Mammary epithelial cell (primary cell): ENCODE measurements at regions of chr13 and their contacts with region 1.

Region 1: GRCh38 chr13:39777527-39778061 is 122.1 kb downstream of the COG6 start:
- DNase-seq: peak; percentile 92
- H3K4me3 ChIP-seq: no peak overlapping the region
- H3K27ac ChIP-seq: no peak overlapping the region
- H3K4me1 ChIP-seq: peaks cover 15% of the 10 kb centered on the region
- H3K27me3 ChIP-seq: no peaks in the 10 kb centered on the region
- CTCF ChIP-seq: peak; percentile 56 to 69

Region 2: GRCh38 chr13:39684531-39685137 is 93.0 kb before region 1 on chr13:
- CTCF ChIA-PET with region 1: no interaction called
- dilution Hi-C with region 1: no loop called
- in situ Hi-C with region 1: no loop called
- intact Hi-C with region 1: loop called (anchors 5 kb)
- DNase-seq: peak; percentile 16
- H3K4me3 ChIP-seq: no peak overlapping the region
- H3K27ac ChIP-seq: no peak overlapping the region
- H3K4me1 ChIP-seq: no peaks in the 10 kb centered on the region
- H3K27me3 ChIP-seq: no peaks in the 10 kb centered on the region
- CTCF ChIP-seq: peak; percentile 21 to 25

Region 3: DNA sequence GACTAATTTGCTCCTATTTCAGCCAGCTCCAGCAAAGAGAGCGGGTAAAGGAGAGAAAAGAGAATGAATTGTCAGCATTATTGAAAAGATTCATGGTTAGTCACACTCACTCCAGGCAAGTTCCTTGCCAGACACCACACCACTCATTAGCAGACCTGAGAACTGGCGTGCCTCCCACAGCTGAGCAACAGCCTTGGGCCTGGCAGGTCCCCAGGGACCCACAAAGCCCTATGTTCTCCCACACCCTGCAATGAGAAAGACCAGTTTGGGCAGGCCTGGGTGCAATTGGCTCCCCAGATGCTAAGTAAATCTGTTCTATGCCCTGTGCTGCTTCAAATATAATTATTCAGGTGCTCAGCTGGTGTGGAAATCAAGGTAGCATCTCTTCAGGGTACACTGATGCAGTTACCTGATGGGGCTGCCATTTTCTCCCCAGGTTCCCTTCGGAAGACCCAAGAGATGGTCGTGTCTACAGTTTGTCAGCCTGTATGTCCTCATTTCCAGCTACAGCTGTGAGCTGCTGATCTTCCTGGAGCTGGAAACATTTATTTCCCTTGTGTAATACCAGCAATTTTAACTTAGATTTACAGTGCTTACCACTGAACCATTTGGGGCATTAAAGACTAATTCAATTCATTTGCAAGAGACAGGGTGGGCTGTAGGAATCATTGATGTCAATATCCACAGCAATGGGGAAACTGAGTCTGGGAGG is 282.9 kb after region 1 on chr13:
- CTCF ChIA-PET with region 1: no interaction called
- dilution Hi-C with region 1: no loop called
- in situ Hi-C with region 1: no loop called
- intact Hi-C with region 1: loop called (anchors 5 kb)
- DNase-seq: peak; percentile 99
- H3K4me3 ChIP-seq: no peak overlapping the region
- H3K27ac ChIP-seq: peak overlapping the region; percentile 76
- H3K4me1 ChIP-seq: peaks cover 63% of the 10 kb centered on the region
- H3K27me3 ChIP-seq: no peaks in the 10 kb centered on the region
- CTCF ChIP-seq: no peak